CD8-positive, alpha-beta memory T cell (primary cell): ENCODE measurements at regions of chr17 and their contacts with region 1.

Region 1: GRCh38 chr17:3723556-3724369 is at the start of gene HASPIN:
- DNase-seq: peak; percentile 88 to 94 (median 90)
- H3K4me3 ChIP-seq: peak within 1 kb of the TSS; percentile 68
- H3K4me3 Mint-ChIP-seq: peak within 1 kb of the TSS; percentile 92 to 98 (median 94)
- H3K27ac ChIP-seq: peak within 1 kb of the TSS; percentile 29
- H3K27ac Mint-ChIP-seq: peak within 1 kb of the TSS; percentile 48 to 96 (median 92)
- H3K4me1 ChIP-seq: peaks cover 18% of the 10 kb centered on the region
- H3K4me1 Mint-ChIP-seq: peaks cover 24 to 49% (median 39%) of the 10 kb centered on the region in 3 donors
- H3K27me3 ChIP-seq: no peaks in the 10 kb centered on the region
- H3K27me3 Mint-ChIP-seq: no peaks in the 10 kb centered on the region
- total RNA-seq, gene HASPIN: 16.0 to 16.6 TPM

Region 2: DNA sequence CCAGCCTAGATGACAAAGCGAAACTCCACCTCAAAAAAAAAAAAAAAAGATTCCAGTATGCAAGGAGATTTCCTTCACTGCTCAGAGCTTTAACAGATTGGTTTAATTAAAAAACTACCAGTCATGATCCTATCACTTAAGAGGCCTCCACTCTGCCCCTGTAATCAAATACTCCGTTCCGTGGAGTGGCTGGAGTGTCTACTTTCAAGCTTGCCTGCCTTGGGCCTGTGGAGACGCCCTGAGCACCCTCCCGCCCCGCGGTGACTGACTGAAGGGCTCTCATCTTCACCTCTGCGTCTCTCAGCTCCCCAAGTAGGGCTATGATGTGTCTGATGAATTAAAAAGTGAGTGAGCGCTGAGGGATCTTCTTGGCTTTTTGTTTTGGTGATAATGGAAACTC is 140.8 kb before region 1 on chr17:
- CTCF ChIA-PET with region 1: no interaction called
- POLR2A ChIA-PET with region 1: no interaction called
- DNase-seq: no peak
- H3K4me3 ChIP-seq: no peak overlapping the region
- H3K4me3 Mint-ChIP-seq: no peak overlapping the region
- H3K27ac ChIP-seq: no peak overlapping the region
- H3K27ac Mint-ChIP-seq: peak overlapping the region in 1 of 8 donors; percentile 46
- H3K4me1 ChIP-seq: no peaks in the 10 kb centered on the region
- H3K4me1 Mint-ChIP-seq: no peaks in the 10 kb centered on the region
- H3K27me3 ChIP-seq: no peaks in the 10 kb centered on the region
- H3K27me3 Mint-ChIP-seq: no peaks in the 10 kb centered on the region

Region 3: GRCh38 chr17:3683054-3683511 is 40.7 kb before region 1 on chr17:
- CTCF ChIA-PET with region 1: interaction called, 16 read pairs
- POLR2A ChIA-PET with region 1: no interaction called
- DNase-seq: peak in 4 of 5 donors; percentile 42 to 74 (median 54)
- H3K4me3 ChIP-seq: no peak overlapping the region
- H3K4me3 Mint-ChIP-seq: peak overlapping the region in 2 of 7 donors; percentile 26 to 27
- H3K27ac ChIP-seq: no peak overlapping the region
- H3K27ac Mint-ChIP-seq: peak overlapping the region in 6 of 8 donors; percentile 1 to 79 (median 70)
- H3K4me1 ChIP-seq: peaks cover 6% of the 10 kb centered on the region
- H3K4me1 Mint-ChIP-seq: peaks cover 7 to 14% (median 10%) of the 10 kb centered on the region in 3 donors
- H3K27me3 ChIP-seq: no peaks in the 10 kb centered on the region
- H3K27me3 Mint-ChIP-seq: no peaks in the 10 kb centered on the region

Region 4: GRCh38 chr17:3710951-3711383 is 12.8 kb before region 1 on chr17:
- CTCF ChIA-PET with region 1: interaction called, 6 read pairs
- POLR2A ChIA-PET with region 1: interaction called, 12 read pairs
- DNase-seq: peak; percentile 35 to 89 (median 83)
- H3K4me3 ChIP-seq: no peak overlapping the region
- H3K4me3 Mint-ChIP-seq: peak overlapping the region; percentile 29 to 86 (median 68)
- H3K27ac ChIP-seq: no peak overlapping the region
- H3K27ac Mint-ChIP-seq: peak overlapping the region; percentile 78 to 97 (median 90)
- H3K4me1 ChIP-seq: peaks cover 29% of the 10 kb centered on the region
- H3K4me1 Mint-ChIP-seq: peaks cover 39 to 48% (median 44%) of the 10 kb centered on the region in 3 donors
- H3K27me3 ChIP-seq: no peaks in the 10 kb centered on the region
- H3K27me3 Mint-ChIP-seq: no peaks in the 10 kb centered on the region

Region 5: GRCh38 chr17:3835410-3836229 is 111.9 kb after region 1 on chr17:
- CTCF ChIA-PET with region 1: no interaction called
- POLR2A ChIA-PET with region 1: no interaction called
- DNase-seq: no peak
- H3K4me3 ChIP-seq: no peak overlapping the region
- H3K4me3 Mint-ChIP-seq: no peak overlapping the region
- H3K27ac ChIP-seq: no peak overlapping the region
- H3K27ac Mint-ChIP-seq: peak overlapping the region in 2 of 8 donors; percentile 14 to 20
- H3K4me1 ChIP-seq: no peaks in the 10 kb centered on the region
- H3K4me1 Mint-ChIP-seq: peaks cover 11 to 37% (median 30%) of the 10 kb centered on the region in 3 donors
- H3K27me3 ChIP-seq: no peaks in the 10 kb centered on the region
- H3K27me3 Mint-ChIP-seq: no peaks in the 10 kb centered on the region